ENCODE measurements at regions of chr2 and their contacts with region 1.

Region 1: GRCh38 chr2:129880309-129880708 is 99.2 kb upstream of the RAB6C start:
- DNase-seq: no peak
- ATAC-seq: no peak
- H3K4me3 ChIP-seq: no peak overlapping the region
- H3K27ac ChIP-seq: no peak overlapping the region
- H3K4me1 ChIP-seq: no peaks in the 10 kb centered on the region
- H3K27me3 ChIP-seq: no peaks in the 10 kb centered on the region; the same call in 1 of the 2 replicates
- CTCF ChIP-seq: no peak

Region 2: DNA sequence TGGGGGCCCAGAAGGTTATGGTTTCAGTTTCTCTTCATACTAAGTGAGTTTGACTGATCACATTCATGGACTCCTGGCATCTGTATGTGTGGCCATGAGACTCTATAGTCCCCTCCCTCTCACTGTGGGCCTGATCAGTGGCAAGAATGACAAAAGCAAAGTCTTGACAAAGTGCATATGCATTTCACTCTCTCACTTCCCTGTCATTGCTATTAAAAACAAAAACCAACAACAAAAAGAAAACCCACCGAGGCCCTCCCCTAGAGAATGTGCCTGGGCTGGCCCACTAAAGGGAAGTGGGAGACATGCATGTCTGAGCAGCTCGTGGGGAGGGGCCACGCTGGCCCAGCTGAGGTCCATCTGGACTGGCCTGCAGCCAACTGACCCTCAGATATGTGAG is 500.9 kb before region 1 on chr2:
- CTCF ChIA-PET with region 1: no interaction called
- POLR2A ChIA-PET with region 1: interaction called, 12 read pairs
- in situ Hi-C with region 1: no loop called
- intact Hi-C with region 1: no loop called
- DNase-seq: no peak
- ATAC-seq: no peak
- H3K4me3 ChIP-seq: no peak overlapping the region
- H3K27ac ChIP-seq: no peak overlapping the region
- H3K4me1 ChIP-seq: no peaks in the 10 kb centered on the region
- H3K27me3 ChIP-seq: no peaks in the 10 kb centered on the region
- CTCF ChIP-seq: no peak

Region 3: DNA sequence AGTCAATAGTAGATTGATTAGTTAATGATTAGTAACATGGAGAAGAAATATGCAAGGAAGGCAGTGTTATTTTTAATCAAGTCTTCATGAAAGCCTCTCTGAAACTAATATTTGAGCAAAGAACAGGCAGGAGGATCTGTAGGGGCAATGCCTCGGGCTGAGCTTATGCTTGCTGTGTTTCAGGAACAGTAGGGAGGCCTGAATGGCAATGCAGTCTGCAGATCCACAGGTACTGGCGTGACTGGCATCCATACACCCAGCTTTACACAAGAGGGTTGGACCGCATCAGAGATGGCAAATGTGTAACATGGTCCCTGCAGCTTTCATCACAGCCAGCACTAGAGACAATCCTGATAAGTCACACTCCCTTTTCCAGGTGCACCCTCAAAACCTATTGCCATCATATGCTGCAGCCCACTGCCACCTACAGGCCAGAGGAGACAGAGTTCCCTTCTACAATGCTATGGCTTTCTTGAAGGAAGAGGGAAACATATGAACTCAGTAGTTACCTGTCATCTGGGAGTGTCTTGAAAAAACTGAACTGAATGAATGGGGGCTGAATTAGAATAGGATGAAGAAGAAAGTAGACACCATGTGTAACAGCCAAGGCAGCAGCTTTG is 483.2 kb before region 1 on chr2:
- CTCF ChIA-PET with region 1: no interaction called
- POLR2A ChIA-PET with region 1: no interaction called
- in situ Hi-C with region 1: no loop called
- intact Hi-C with region 1: no loop called
- DNase-seq: peak; percentile 24
- ATAC-seq: peak; percentile 69
- H3K4me3 ChIP-seq: no peak overlapping the region
- H3K27ac ChIP-seq: no peak overlapping the region
- H3K4me1 ChIP-seq: no peaks in the 10 kb centered on the region
- H3K27me3 ChIP-seq: no peaks in the 10 kb centered on the region
- CTCF ChIP-seq: peak; percentile 75

Region 4: DNA sequence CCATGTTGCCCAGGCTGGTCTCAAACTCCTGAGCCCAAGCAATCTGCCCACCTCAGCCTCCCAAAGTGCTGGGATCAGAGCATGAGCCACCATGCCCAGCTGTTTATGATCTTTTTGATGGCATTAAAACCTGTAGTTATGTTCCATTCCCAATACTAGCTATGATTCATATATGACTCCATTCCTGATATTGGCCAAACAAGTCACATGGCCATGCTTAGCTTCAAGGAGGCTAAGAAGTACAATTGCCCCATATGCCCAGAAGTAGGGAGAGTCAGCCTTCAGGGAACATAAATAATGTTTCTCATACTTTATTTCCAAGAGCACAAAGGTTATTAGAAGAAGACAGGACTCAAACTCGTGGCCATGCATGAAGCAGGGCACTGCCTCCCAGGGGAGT is 33.3 kb before region 1 on chr2:
- CTCF ChIA-PET with region 1: no interaction called
- POLR2A ChIA-PET with region 1: no interaction called
- in situ Hi-C with region 1: no loop called
- intact Hi-C with region 1: no loop called
- DNase-seq: no peak
- ATAC-seq: no peak
- H3K4me3 ChIP-seq: no peak overlapping the region
- H3K27ac ChIP-seq: no peak overlapping the region
- H3K4me1 ChIP-seq: no peaks in the 10 kb centered on the region; the same call in 1 of the 2 replicates
- H3K27me3 ChIP-seq: peaks cover 3% of the 10 kb centered on the region; the same call in 1 of the 2 replicates
- CTCF ChIP-seq: no peak

Measured in Panc1 (cell line).